Activated CD4-positive, alpha-beta memory T cell treated with anti-CD3 and anti-CD28 coated beads, Interleukin-2, amount 10 ng/mL, durations not matched to agents 7 days and 5 days (primary cell): ENCODE measurements at regions of chr2 and their contacts with region 1.

Region 1: GRCh38 chr2:160994141-160995002 is 165.9 kb upstream of the TANK start:
- DNase-seq: peak; percentile 71
- H3K4me3 Mint-ChIP-seq: no peak overlapping the region
- H3K27ac Mint-ChIP-seq: no peak overlapping the region
- H3K4me1 Mint-ChIP-seq: peaks cover 7% of the 10 kb centered on the region
- H3K27me3 Mint-ChIP-seq: no peaks in the 10 kb centered on the region

Region 2: GRCh38 chr2:160109936-160110673 is 884.3 kb before region 1 on chr2:
- CTCF ChIA-PET with region 1: interaction called, 25 read pairs
- POLR2A ChIA-PET with region 1: interaction called, 3 read pairs
- DNase-seq: peak; percentile 49
- H3K4me3 Mint-ChIP-seq: no peak overlapping the region
- H3K27ac Mint-ChIP-seq: no peak overlapping the region
- H3K4me1 Mint-ChIP-seq: no peaks in the 10 kb centered on the region
- H3K27me3 Mint-ChIP-seq: peaks cover 10% of the 10 kb centered on the region

Region 3: GRCh38 chr2:160252278-160252887 is 742.0 kb before region 1 on chr2:
- CTCF ChIA-PET with region 1: interaction called, 24 read pairs
- POLR2A ChIA-PET with region 1: no interaction called
- DNase-seq: no peak
- H3K4me3 Mint-ChIP-seq: no peak overlapping the region
- H3K27ac Mint-ChIP-seq: no peak overlapping the region
- H3K4me1 Mint-ChIP-seq: no peaks in the 10 kb centered on the region
- H3K27me3 Mint-ChIP-seq: peaks cover 8% of the 10 kb centered on the region

Region 4: DNA sequence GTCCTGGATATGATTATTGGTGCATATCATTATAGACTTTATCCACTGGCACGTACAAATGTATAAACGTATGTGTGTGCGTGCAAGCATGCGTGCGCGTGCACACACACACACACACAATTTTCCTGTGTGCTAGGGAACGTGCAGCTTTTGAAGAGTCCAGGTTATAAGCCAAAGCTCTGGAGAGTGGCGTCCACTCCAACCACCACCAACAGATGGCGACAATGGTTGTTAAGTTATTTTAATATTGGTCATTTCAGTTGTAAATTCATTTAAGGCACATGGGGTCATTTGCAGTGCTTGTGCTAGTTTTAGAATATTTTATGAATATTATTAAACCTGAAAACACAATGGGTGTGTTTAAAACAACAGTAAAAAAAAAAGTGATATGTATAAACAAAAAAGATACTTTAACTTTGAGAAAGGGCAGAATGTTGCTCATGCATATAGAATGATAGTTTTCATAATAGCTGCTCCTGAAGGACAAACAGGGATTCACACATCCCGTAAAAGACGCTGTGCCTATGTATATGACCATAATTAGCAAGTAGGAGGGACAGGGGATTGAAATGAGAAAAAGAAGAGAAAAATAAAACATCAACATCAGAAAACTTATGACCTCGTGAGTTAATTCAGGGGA is 670.1 kb before region 1 on chr2:
- CTCF ChIA-PET with region 1: interaction called, 37 read pairs
- POLR2A ChIA-PET with region 1: no interaction called
- DNase-seq: peak; percentile 49
- H3K4me3 Mint-ChIP-seq: no peak overlapping the region
- H3K27ac Mint-ChIP-seq: no peak overlapping the region
- H3K4me1 Mint-ChIP-seq: peaks cover 50% of the 10 kb centered on the region
- H3K27me3 Mint-ChIP-seq: peaks cover 4% of the 10 kb centered on the region

Region 5: DNA sequence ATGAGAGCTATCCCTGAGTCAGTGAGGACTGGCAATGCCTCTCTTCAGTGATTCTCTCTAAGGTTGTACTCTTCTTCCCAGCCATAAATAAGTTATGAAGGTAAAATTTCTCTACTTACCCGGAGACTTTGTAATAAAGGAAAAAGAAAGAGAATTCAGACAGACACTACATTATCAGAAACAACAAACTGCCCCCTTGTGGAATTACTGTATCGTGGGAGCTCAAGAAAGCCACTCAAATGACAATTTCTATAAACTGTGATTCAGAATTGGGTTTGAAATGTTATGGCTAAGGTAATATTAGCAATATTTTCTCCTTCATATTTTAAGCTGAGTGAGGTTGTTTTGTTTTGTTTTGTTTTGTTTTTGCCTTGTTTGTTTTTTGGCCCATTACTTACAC is 10.0 kb after region 1 on chr2:
- CTCF ChIA-PET with region 1: interaction called, 18 read pairs
- POLR2A ChIA-PET with region 1: no interaction called
- DNase-seq: no peak
- H3K4me3 Mint-ChIP-seq: no peak overlapping the region
- H3K27ac Mint-ChIP-seq: no peak overlapping the region
- H3K4me1 Mint-ChIP-seq: no peaks in the 10 kb centered on the region
- H3K27me3 Mint-ChIP-seq: peaks cover 20% of the 10 kb centered on the region